Activated CD4-positive, alpha-beta T cell treated with anti-CD3 and anti-CD28 coated beads, Interleukin-2, amount 10 ng/mL, durations not matched to agents 24 days and 14 days (primary cell): ENCODE measurements at regions of chr9 and their contacts with region 1.

Region 1: GRCh38 chr9:99134893-99135341 is 30.0 kb downstream of the TGFBR1 start:
- DNase-seq: peak; percentile 79
- H3K4me3 Mint-ChIP-seq: peak overlapping the region; percentile 65
- H3K27ac Mint-ChIP-seq: peak overlapping the region; percentile 59
- H3K4me1 Mint-ChIP-seq: peaks cover 62% of the 10 kb centered on the region
- H3K27me3 Mint-ChIP-seq: no peaks in the 10 kb centered on the region

Region 2: DNA sequence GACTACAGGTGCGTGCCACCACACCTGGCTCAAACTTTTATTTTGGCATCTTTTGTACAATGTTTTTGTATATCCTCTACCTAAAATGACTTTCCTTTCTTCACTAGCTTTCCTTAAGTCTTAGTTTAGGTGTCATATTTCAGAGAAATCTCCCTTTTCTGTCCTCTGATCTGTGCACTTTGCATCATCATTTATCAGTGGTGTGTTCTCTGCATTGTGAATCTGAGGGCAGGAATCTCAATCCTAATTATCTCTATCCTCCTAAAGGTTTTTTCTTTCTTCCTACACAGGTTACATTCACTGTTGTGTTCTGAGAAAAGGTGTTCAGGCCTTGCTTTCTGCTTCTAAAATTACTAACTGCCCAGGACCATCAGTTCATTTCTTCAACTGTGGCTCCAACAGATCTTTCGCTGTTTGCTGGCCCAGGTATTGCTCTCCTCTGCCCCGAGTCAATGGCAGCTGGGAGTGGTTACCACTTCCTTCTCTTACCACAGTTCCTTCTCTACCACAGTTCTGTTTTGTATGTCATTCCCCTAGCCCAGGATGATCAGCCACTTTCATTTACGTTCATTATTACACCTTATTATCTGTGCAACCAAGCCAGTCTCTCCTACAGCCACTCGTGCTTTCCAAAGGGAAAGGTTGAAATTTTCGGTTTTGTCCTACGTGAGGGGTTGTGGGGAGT is 16.0 kb before region 1 on chr9:
- intact Hi-C with region 1: loop called (anchors 2 kb)
- DNase-seq: peak; percentile 87
- H3K4me3 Mint-ChIP-seq: peak overlapping the region; percentile 81
- H3K27ac Mint-ChIP-seq: peak overlapping the region; percentile 90
- H3K4me1 Mint-ChIP-seq: peaks cover 57% of the 10 kb centered on the region
- H3K27me3 Mint-ChIP-seq: no peaks in the 10 kb centered on the region